ENCODE measurements at regions of chr4 and their contacts with region 1.

Region 1: GRCh38 chr4:1712216-1713002 is at the start of gene SLBP:
- DNase-seq: peak; percentile 98 to 99 (median 99)
- H3K4me3 ChIP-seq: peak within 1 kb of the TSS; percentile 62 to 99
- H3K4me3 Mint-ChIP-seq: peak within 1 kb of the TSS; percentile 95 to 99 (median 98)
- H3K27ac ChIP-seq: peak within 1 kb of the TSS; percentile 92
- H3K27ac Mint-ChIP-seq: peak within 1 kb of the TSS; percentile 95 to 98 (median 97)
- H3K4me1 ChIP-seq: peaks cover 67% of the 10 kb centered on the region
- H3K4me1 Mint-ChIP-seq: peaks cover 31 to 74% (median 53%) of the 10 kb centered on the region in 4 donors
- H3K27me3 ChIP-seq: no peaks in the 10 kb centered on the region
- H3K27me3 Mint-ChIP-seq: no peaks in the 10 kb centered on the region
- total RNA-seq, gene SLBP: 41.8 to 47.4 TPM

Region 2: GRCh38 chr4:1579901-1580691 is 132.3 kb before region 1 on chr4:
- CTCF ChIA-PET with region 1: no interaction called
- POLR2A ChIA-PET with region 1: interaction called, 8 read pairs
- intact Hi-C with region 1: loop called (anchors 1 kb)
- DNase-seq: peak in 4 of 5 donors; percentile 90 to 92 (median 91)
- H3K4me3 ChIP-seq: peak overlapping the region; percentile 29 to 91
- H3K4me3 Mint-ChIP-seq: peak overlapping the region; percentile 72 to 83 (median 78)
- H3K27ac ChIP-seq: peak overlapping the region; percentile 74
- H3K27ac Mint-ChIP-seq: peak overlapping the region; percentile 52 to 85 (median 70)
- H3K4me1 ChIP-seq: peaks cover 6% of the 10 kb centered on the region
- H3K4me1 Mint-ChIP-seq: peaks cover 0 to 7% (median 4%) of the 10 kb centered on the region in 4 donors
- H3K27me3 ChIP-seq: no peaks in the 10 kb centered on the region
- H3K27me3 Mint-ChIP-seq: no peaks in the 10 kb centered on the region

Region 3: DNA sequence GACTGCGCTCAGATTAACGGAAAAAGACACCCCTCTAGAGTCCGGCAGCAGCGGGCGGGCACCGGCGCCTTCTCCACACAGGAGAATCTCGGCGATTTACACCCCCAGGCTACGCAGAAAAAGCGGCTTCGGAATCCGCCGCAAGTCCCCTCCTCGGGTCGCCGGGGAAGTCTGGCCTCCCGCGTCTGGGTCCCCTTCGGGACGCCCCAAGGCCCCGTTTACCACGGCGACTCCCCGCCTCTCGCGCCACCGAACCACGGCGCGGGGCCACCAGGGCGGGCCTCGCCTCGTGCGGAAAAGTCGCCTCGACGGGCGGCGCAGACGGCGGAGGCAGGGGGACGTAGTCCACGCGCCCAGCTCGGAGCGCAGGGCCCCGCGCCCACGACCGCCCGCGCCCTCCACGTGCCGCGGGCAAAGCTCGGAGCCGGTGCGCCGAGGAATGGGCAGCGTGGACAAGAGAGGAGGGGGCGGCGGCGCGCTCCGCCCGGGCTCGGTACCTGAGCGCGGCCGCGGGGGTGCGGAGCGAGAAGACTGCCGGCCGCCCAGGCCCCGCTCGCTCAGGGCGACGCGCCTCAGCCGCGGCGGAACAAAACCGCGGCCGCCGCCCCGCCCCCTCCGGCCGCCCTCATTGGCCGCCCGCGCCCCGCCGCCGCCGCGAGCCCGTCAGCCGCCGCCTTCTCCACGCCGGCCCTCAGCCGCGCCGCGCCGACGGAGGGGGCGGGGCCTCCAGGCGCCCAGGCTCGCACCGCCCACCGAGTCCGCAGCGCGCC is 28.5 kb before region 1 on chr4 and contains the start of gene FAM53A:
- CTCF ChIA-PET with region 1: interaction called, 591 read pairs
- POLR2A ChIA-PET with region 1: no interaction called
- intact Hi-C with region 1: loop called (anchors 1 kb)
- DNase-seq: peak; percentile 57 to 92 (median 90)
- H3K4me3 ChIP-seq: peak within 1 kb of the TSS; percentile 52 to 58
- H3K4me3 Mint-ChIP-seq: peak within 1 kb of the TSS; percentile 88 to 93 (median 91)
- H3K27ac ChIP-seq: peak within 1 kb of the TSS; percentile 52
- H3K27ac Mint-ChIP-seq: peak within 1 kb of the TSS; percentile 89 to 96 (median 95)
- H3K4me1 ChIP-seq: peaks cover 7% of the 10 kb centered on the region
- H3K4me1 Mint-ChIP-seq: peaks cover 9 to 16% (median 11%) of the 10 kb centered on the region in 4 donors
- H3K27me3 ChIP-seq: no peaks in the 10 kb centered on the region
- H3K27me3 Mint-ChIP-seq: no peaks in the 10 kb centered on the region
- total RNA-seq, gene FAM53A: 0.89 to 2.2 TPM

Region 4: GRCh38 chr4:1693129-1693896 is 19.1 kb before region 1 on chr4:
- CTCF ChIA-PET with region 1: interaction called, 591 read pairs
- POLR2A ChIA-PET with region 1: interaction called, 35 read pairs
- intact Hi-C with region 1: loop called (anchors 1 kb)
- DNase-seq: peak; percentile 77 to 81 (median 81)
- H3K4me3 ChIP-seq: no peak overlapping the region
- H3K4me3 Mint-ChIP-seq: no peak overlapping the region
- H3K27ac ChIP-seq: no peak overlapping the region
- H3K27ac Mint-ChIP-seq: peak overlapping the region in 6 of 7 donors; percentile 26 to 90 (median 62)
- H3K4me1 ChIP-seq: peaks cover 4% of the 10 kb centered on the region
- H3K4me1 Mint-ChIP-seq: peaks cover 3 to 5% (median 4%) of the 10 kb centered on the region in 4 donors
- H3K27me3 ChIP-seq: no peaks in the 10 kb centered on the region
- H3K27me3 Mint-ChIP-seq: no peaks in the 10 kb centered on the region

Region 5: GRCh38 chr4:1726146-1726934 is 13.9 kb after region 1 on chr4:
- CTCF ChIA-PET with region 1: interaction called, 13 read pairs
- POLR2A ChIA-PET with region 1: interaction called, 196 read pairs
- intact Hi-C with region 1: loop called (anchors 1 kb)
- DNase-seq: peak; percentile 81 to 88 (median 85)
- H3K4me3 ChIP-seq: no peak overlapping the region
- H3K4me3 Mint-ChIP-seq: peak overlapping the region in 7 of 8 donors; percentile 36 to 76 (median 59)
- H3K27ac ChIP-seq: no peak overlapping the region
- H3K27ac Mint-ChIP-seq: peak overlapping the region; percentile 54 to 89 (median 82)
- H3K4me1 ChIP-seq: peaks cover 79% of the 10 kb centered on the region
- H3K4me1 Mint-ChIP-seq: peaks cover 38 to 87% (median 56%) of the 10 kb centered on the region in 4 donors
- H3K27me3 ChIP-seq: no peaks in the 10 kb centered on the region
- H3K27me3 Mint-ChIP-seq: no peaks in the 10 kb centered on the region

Region 6: DNA sequence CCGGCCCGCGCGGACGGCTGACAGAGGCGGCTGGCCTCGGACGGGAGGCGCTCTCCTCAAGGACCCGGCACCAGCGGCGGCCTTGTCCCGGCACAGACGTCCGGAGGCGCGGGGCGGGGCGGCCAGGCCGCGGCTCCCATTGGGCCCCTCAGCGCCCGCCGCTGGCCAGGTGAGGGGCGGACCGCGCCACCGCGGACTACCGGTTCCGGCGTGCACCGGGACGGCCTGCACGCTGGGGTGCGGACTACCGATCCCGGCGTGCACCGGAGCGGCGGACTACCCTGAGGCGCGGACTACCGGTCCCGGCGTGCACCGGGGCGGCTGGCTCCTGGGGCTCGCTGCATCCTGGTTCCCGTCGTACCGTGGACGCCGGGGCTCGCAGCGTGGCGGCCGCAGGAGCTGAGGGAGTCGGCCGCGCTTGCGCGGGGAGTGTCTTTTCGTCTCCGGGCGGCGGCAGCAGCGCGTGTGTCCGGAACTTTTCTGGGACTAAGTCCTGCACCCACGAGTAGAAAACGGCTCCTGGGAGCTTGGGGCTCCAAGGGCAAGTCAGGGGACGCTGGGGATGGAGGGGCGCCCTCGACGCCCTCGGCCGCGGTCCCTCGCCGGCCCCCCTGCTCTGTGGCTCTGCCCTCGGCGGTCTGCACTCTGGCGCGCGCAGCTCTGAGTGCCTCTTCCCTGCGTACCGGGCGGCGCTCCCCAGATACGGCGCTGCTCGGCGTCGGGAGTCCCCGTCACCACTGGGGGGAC is 143.8 kb after region 1 on chr4 and contains the start of gene LETM1:
- CTCF ChIA-PET with region 1: no interaction called
- POLR2A ChIA-PET with region 1: interaction called, 3 read pairs
- intact Hi-C with region 1: loop called (anchors 5 kb)
- DNase-seq: peak; percentile 90 to 92 (median 91)
- H3K4me3 ChIP-seq: peak within 1 kb of the TSS; percentile 47 to 89
- H3K4me3 Mint-ChIP-seq: peak within 1 kb of the TSS; percentile 81 to 90 (median 85)
- H3K27ac ChIP-seq: peak within 1 kb of the TSS; percentile 59
- H3K27ac Mint-ChIP-seq: peak within 1 kb of the TSS; percentile 25 to 84 (median 76)
- H3K4me1 ChIP-seq: peaks cover 44% of the 10 kb centered on the region
- H3K4me1 Mint-ChIP-seq: peaks cover 9 to 42% (median 31%) of the 10 kb centered on the region in 4 donors
- H3K27me3 ChIP-seq: no peaks in the 10 kb centered on the region
- H3K27me3 Mint-ChIP-seq: no peaks in the 10 kb centered on the region
- total RNA-seq, gene LETM1: 38.8 to 42.8 TPM

Region 7: GRCh38 chr4:1870578-1871443 is 158.4 kb after region 1 on chr4 and contains the start of gene NSD2:
- CTCF ChIA-PET with region 1: no interaction called
- POLR2A ChIA-PET with region 1: interaction called, 16 read pairs
- intact Hi-C with region 1: loop called (anchors 2 kb)
- DNase-seq: peak; percentile 84 to 89 (median 88)
- H3K4me3 ChIP-seq: peak within 1 kb of the TSS; percentile 47 to 84
- H3K4me3 Mint-ChIP-seq: peak within 1 kb of the TSS; percentile 86 to 97 (median 89)
- H3K27ac ChIP-seq: peak within 1 kb of the TSS; percentile 91
- H3K27ac Mint-ChIP-seq: peak within 1 kb of the TSS; percentile 95 to 99 (median 98)
- H3K4me1 ChIP-seq: peaks cover 36% of the 10 kb centered on the region
- H3K4me1 Mint-ChIP-seq: peaks cover 21 to 39% (median 32%) of the 10 kb centered on the region in 4 donors
- H3K27me3 ChIP-seq: no peaks in the 10 kb centered on the region
- H3K27me3 Mint-ChIP-seq: peaks cover 0 to 3% of the 10 kb centered on the region in 2 donors
- total RNA-seq, gene NSD2: 54.8 to 57.4 TPM

Measured in CD4-positive, alpha-beta memory T cell (primary cell).